ENCODE measurements at regions of chr1 and their contacts with region 1.

Region 1: DNA sequence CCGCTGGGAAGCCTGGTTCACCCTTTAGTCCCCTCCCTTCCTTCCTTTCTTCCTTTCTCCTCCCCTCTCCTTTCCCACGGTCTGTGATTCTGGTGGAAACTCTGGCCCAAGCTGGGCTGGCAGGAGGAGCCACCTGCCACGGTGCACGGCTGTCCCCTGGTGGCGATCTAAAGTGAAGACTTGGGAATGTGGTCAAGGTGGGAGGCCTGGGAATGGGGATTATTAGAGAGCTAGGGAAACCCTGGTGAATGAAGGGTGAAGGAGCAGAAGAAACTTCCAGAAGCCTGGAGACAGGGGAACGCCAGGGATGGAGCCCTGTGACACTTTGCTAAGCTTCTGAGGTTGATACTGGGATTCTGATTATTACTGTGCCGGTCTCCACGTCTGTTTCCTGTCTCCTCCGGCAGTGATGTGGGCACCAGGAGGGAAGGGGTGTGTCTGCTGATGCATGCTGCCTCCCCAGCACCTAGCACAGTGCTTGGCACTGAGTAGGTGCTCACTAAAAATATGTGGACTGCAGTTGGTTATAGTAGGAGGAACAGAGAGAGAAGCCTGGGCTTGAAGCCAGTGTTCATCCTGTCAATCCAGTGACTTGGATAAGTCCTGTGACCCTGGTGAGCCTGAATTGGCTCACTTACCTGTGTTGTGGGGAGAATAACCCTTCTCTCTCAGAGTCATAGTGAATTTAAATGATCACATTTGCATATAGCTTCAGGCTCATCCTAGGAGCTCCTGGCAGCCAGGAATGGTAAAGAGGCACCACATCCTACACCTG is 71.2 kb upstream of the NBPF3 start:
- DNase-seq: peak; percentile 83 to 87
- H3K4me3 ChIP-seq: no peak overlapping the region
- H3K27ac ChIP-seq: no peak overlapping the region
- H3K4me1 ChIP-seq: no peaks in the 10 kb centered on the region
- H3K27me3 ChIP-seq: no peaks in the 10 kb centered on the region
- CTCF ChIP-seq: peak; percentile 77 to 100 (median 100)
- POLR2A ChIP-seq: no peak

Region 2: GRCh38 chr1:20867847-20868246 is 500.9 kb before region 1 on chr1:
- intact Hi-C with region 1: no loop called
- DNase-seq: no peak
- H3K4me3 ChIP-seq: no peak overlapping the region
- H3K27ac ChIP-seq: no peak overlapping the region
- H3K4me1 ChIP-seq: no peaks in the 10 kb centered on the region
- H3K27me3 ChIP-seq: no peaks in the 10 kb centered on the region
- CTCF ChIP-seq: no peak
- POLR2A ChIP-seq: no peak

Region 3: GRCh38 chr1:21232044-21232443 is 136.7 kb before region 1 on chr1:
- intact Hi-C with region 1: loop called (anchors 2 kb)
- DNase-seq: peak; percentile 36 to 45
- H3K4me3 ChIP-seq: no peak overlapping the region
- H3K27ac ChIP-seq: no peak overlapping the region
- H3K4me1 ChIP-seq: no peaks in the 10 kb centered on the region
- H3K27me3 ChIP-seq: no peaks in the 10 kb centered on the region
- CTCF ChIP-seq: peak; percentile 58 to 91 (median 75)
- POLR2A ChIP-seq: no peak

Region 4: GRCh38 chr1:21255278-21255942 is 113.3 kb before region 1 on chr1:
- intact Hi-C with region 1: loop called (anchors 2 kb)
- DNase-seq: peak; percentile 89 to 93
- H3K4me3 ChIP-seq: no peak overlapping the region
- H3K27ac ChIP-seq: peak overlapping the region in 2 of 3 donors; percentile 15 to 53
- H3K4me1 ChIP-seq: peaks cover 14 to 18% of the 10 kb centered on the region in 2 donors
- H3K27me3 ChIP-seq: no peaks in the 10 kb centered on the region
- CTCF ChIP-seq: peak; percentile 52 to 91 (median 82)
- POLR2A ChIP-seq: no peak

Region 5: GRCh38 chr1:21659099-21659923 is 290.6 kb after region 1 on chr1:
- intact Hi-C with region 1: loop called (anchors 5 kb)
- DNase-seq: peak; percentile 89 to 90
- H3K4me3 ChIP-seq: peak overlapping the region in 1 of 3 donors; percentile 3
- H3K27ac ChIP-seq: peak overlapping the region; percentile 51 to 74 (median 54)
- H3K4me1 ChIP-seq: peaks cover 30 to 33% of the 10 kb centered on the region in 2 donors
- H3K27me3 ChIP-seq: no peaks in the 10 kb centered on the region
- CTCF ChIP-seq: peak; percentile 88 to 99 (median 97)
- POLR2A ChIP-seq: peak in 1 of 2 donors; percentile 42